ENCODE measurements at regions of chr3 and their contacts with region 1.

Region 1: GRCh38 chr3:56915966-56916586 is 114.3 kb upstream of the ARHGEF3 start:
- DNase-seq: peak; percentile 90
- ATAC-seq: peak; percentile 93
- H3K4me3 Mint-ChIP-seq: peak overlapping the region; percentile 92
- H3K27ac Mint-ChIP-seq: peak overlapping the region; percentile 99
- H3K4me1 Mint-ChIP-seq: peaks cover 63% of the 10 kb centered on the region
- H3K27me3 Mint-ChIP-seq: no peaks in the 10 kb centered on the region

Region 2: GRCh38 chr3:56314842-56315241 is 601.2 kb before region 1 on chr3:
- CTCF ChIA-PET with region 1: no interaction called
- POLR2A ChIA-PET with region 1: no interaction called
- DNase-seq: no peak
- ATAC-seq: no peak
- H3K4me3 Mint-ChIP-seq: no peak overlapping the region
- H3K27ac Mint-ChIP-seq: no peak overlapping the region
- H3K4me1 Mint-ChIP-seq: no peaks in the 10 kb centered on the region
- H3K27me3 Mint-ChIP-seq: peaks cover 5% of the 10 kb centered on the region

Region 3: GRCh38 chr3:56702490-56703315 is 213.4 kb before region 1 on chr3:
- CTCF ChIA-PET with region 1: interaction called, 18 read pairs
- POLR2A ChIA-PET with region 1: interaction called, 7 read pairs
- DNase-seq: peak; percentile 74
- ATAC-seq: peak; percentile 73
- H3K4me3 Mint-ChIP-seq: no peak overlapping the region
- H3K27ac Mint-ChIP-seq: no peak overlapping the region
- H3K4me1 Mint-ChIP-seq: peaks cover 34% of the 10 kb centered on the region
- H3K27me3 Mint-ChIP-seq: no peaks in the 10 kb centered on the region

Region 4: GRCh38 chr3:56748663-56749231 is 167.3 kb before region 1 on chr3:
- CTCF ChIA-PET with region 1: no interaction called
- POLR2A ChIA-PET with region 1: no interaction called
- DNase-seq: peak; percentile 9
- ATAC-seq: no peak
- H3K4me3 Mint-ChIP-seq: no peak overlapping the region
- H3K27ac Mint-ChIP-seq: peak overlapping the region; percentile 9
- H3K4me1 Mint-ChIP-seq: peaks cover 61% of the 10 kb centered on the region
- H3K27me3 Mint-ChIP-seq: no peaks in the 10 kb centered on the region

Region 5: DNA sequence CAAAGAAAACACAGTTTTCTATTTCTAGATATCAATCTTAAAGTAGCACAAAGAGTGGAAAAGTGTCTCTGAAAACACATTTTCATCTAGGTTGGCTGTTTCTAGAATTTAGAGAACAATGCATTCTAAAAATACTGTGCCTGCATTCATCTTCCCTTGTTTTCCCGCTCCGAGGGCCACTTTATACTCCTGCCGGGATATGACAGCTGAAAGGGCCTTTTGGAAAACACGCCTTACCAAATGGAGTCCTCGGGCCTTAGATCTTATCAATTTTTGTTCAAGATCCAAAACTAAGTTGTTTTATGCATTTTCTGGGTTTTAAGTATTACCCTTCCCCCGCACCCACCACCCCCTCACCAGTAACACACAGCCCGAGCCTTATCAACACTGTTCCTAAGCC is 66.4 kb before region 1 on chr3:
- CTCF ChIA-PET with region 1: no interaction called
- POLR2A ChIA-PET with region 1: no interaction called
- DNase-seq: no peak
- ATAC-seq: no peak
- H3K4me3 Mint-ChIP-seq: no peak overlapping the region
- H3K27ac Mint-ChIP-seq: no peak overlapping the region
- H3K4me1 Mint-ChIP-seq: peaks cover 7% of the 10 kb centered on the region
- H3K27me3 Mint-ChIP-seq: no peaks in the 10 kb centered on the region

Region 6: DNA sequence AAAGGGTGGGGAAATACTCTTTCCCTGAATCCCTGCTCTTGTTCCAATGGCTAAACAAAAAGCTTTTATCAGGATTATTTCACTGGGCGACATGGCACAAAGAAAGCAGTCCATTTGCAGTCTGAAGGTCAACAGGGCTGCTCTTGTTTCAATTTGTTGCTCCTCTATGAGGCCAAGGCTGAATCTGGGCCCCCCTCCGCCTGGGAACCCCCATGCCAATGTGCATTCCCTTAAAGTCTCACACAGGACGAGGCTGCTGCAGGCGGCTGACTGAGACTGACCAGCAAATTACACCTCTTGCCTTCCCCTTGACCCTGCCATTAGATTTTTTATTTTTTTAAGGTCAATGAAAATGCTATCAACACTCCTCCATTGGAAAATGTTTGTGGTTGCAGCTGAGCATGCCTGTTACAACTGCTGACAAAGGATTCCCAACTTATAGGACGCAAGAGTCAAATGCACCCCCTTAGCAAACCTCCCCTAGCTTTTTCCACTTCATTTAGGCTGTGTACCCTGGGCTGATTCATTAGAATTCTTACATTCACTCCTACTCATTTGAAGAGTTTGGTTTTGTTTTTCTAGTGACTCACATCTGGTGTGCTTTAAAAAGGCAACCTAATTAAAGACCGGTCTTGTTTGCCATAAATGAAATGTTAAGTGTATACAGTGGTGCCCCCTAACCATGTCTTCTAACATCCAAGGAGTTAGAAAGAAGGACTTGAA is 53.6 kb before region 1 on chr3:
- CTCF ChIA-PET with region 1: interaction called, 5 read pairs
- POLR2A ChIA-PET with region 1: interaction called, 16 read pairs
- DNase-seq: no peak
- ATAC-seq: peak; percentile 36
- H3K4me3 Mint-ChIP-seq: no peak overlapping the region
- H3K27ac Mint-ChIP-seq: peak overlapping the region; percentile 17
- H3K4me1 Mint-ChIP-seq: peaks cover 55% of the 10 kb centered on the region
- H3K27me3 Mint-ChIP-seq: no peaks in the 10 kb centered on the region

Region 7: DNA sequence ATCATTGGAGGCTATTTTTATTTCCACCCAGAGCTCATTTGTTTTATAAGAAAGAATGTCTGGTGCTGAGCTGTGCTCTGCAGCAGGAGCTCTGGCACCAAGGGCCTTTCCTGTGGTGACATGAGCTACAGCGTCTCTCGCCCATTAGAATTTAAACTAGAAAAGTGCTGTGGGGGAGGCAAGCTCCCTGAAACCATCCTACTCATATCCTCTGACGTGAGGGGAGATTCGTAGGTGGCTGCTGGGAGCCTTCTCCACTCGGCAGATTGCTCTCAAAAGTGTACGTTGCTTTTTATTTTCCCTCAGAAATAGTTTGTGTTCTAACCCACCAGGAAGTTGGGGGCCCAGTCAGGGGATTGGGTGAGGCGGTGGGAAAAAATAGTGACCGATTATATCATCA is 38.0 kb before region 1 on chr3:
- CTCF ChIA-PET with region 1: interaction called, 10 read pairs
- POLR2A ChIA-PET with region 1: interaction called, 11 read pairs
- DNase-seq: peak; percentile 65
- ATAC-seq: peak; percentile 81
- H3K4me3 Mint-ChIP-seq: peak overlapping the region; percentile 63
- H3K27ac Mint-ChIP-seq: peak overlapping the region; percentile 91
- H3K4me1 Mint-ChIP-seq: peaks cover 67% of the 10 kb centered on the region
- H3K27me3 Mint-ChIP-seq: no peaks in the 10 kb centered on the region

Region 8: GRCh38 chr3:56887402-56888025 is 28.6 kb before region 1 on chr3:
- CTCF ChIA-PET with region 1: interaction called, 17 read pairs
- POLR2A ChIA-PET with region 1: interaction called, 21 read pairs
- DNase-seq: peak; percentile 59
- ATAC-seq: peak; percentile 78
- H3K4me3 Mint-ChIP-seq: peak overlapping the region; percentile 56
- H3K27ac Mint-ChIP-seq: peak overlapping the region; percentile 80
- H3K4me1 Mint-ChIP-seq: peaks cover 65% of the 10 kb centered on the region
- H3K27me3 Mint-ChIP-seq: no peaks in the 10 kb centered on the region

Region 9: GRCh38 chr3:56903231-56903782 is 12.8 kb before region 1 on chr3:
- CTCF ChIA-PET with region 1: interaction called, 17 read pairs
- POLR2A ChIA-PET with region 1: interaction called, 19 read pairs
- DNase-seq: no peak
- ATAC-seq: no peak
- H3K4me3 Mint-ChIP-seq: no peak overlapping the region
- H3K27ac Mint-ChIP-seq: peak overlapping the region; percentile 5
- H3K4me1 Mint-ChIP-seq: peaks cover 40% of the 10 kb centered on the region
- H3K27me3 Mint-ChIP-seq: no peaks in the 10 kb centered on the region

Measured in activated CD8-positive, alpha-beta T cell treated with anti-CD3 and anti-CD28 coated beads, Interleukin-2, amount 10 ng/mL, durations not matched to agents 7 days and 5 days (primary cell).